GM10248 (cell line): ENCODE measurements at regions of chr12 and their contacts with region 1.

Region 1: GRCh38 chr12:95959107-95959506 is 16.0 kb downstream of the AMDHD1 start:
- DNase-seq: no peak
- CTCF ChIP-seq: peak; percentile 9

Region 2: DNA sequence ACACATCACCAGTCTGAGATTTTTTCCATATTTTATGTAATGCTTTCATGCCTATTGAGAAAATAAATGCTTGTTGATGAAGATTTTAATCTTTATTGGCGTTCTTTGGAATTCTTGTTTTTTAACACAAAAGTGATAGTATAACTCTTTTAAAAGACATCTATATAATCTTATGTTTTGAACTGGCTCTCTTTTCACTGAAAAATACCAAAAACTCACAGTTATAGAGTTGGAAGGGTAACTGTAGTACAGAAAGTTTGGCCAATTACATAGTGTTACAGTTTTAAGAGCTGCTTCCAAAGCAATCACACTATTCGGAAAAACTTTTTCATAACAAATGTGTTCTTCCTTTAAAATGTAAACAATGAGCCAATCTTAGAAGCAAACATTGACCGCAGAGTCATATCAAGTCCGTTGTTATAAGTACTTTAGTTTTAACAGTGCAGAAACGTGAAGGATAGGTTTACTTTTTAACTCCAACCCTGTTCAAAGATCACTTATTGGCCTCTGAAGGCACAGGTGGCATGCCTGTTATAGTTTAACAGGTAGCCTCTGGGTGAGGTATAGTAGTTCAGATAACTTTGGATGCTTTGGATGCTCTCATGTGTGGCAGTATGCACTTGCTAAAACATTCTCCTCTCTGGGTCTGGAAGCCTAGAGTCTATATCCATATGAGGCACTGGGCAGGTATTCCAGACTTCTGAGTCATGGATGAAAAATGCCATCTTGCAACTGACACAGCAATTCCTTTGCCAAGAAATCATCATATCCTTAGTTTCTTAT is 156.4 kb before region 1 on chr12:
- CTCF ChIA-PET with region 1: no interaction called
- POLR2A ChIA-PET with region 1: no interaction called
- DNase-seq: no peak
- CTCF ChIP-seq: no peak

Region 3: DNA sequence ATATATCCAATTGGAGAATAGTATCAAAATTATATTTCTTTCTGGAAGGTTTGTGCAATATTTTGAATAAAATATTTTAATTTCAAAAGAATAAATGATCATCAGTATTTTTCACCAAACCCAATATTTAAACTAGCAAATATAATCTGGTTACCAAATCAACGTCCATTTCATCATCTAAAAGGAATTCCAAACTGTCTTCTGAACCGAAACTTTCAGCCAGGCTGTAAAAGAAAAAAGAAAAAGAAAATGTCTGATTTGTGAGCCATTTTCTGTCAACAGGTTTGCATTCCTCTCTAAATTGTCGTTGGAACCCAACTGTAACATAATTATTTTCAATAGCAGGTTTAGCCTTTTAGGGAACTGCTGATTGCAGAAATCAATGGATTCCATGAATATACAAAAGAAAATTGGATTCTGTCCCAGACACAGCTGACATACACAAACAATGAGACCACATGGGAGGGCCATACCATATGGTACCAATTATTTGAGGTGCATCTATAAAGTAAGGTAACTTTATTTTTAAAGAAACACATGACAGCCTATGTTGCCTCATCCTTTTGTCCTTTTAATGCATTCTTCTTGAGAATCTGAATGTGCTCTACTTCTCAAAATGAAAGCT is 77.7 kb before region 1 on chr12:
- CTCF ChIA-PET with region 1: no interaction called
- POLR2A ChIA-PET with region 1: no interaction called
- DNase-seq: no peak
- CTCF ChIP-seq: no peak

Region 4: GRCh38 chr12:95918194-95918993 is 40.7 kb before region 1 on chr12:
- CTCF ChIA-PET with region 1: interaction called, 12 read pairs
- POLR2A ChIA-PET with region 1: no interaction called
- DNase-seq: peak; percentile 48
- CTCF ChIP-seq: peak; percentile 77

Region 5: DNA sequence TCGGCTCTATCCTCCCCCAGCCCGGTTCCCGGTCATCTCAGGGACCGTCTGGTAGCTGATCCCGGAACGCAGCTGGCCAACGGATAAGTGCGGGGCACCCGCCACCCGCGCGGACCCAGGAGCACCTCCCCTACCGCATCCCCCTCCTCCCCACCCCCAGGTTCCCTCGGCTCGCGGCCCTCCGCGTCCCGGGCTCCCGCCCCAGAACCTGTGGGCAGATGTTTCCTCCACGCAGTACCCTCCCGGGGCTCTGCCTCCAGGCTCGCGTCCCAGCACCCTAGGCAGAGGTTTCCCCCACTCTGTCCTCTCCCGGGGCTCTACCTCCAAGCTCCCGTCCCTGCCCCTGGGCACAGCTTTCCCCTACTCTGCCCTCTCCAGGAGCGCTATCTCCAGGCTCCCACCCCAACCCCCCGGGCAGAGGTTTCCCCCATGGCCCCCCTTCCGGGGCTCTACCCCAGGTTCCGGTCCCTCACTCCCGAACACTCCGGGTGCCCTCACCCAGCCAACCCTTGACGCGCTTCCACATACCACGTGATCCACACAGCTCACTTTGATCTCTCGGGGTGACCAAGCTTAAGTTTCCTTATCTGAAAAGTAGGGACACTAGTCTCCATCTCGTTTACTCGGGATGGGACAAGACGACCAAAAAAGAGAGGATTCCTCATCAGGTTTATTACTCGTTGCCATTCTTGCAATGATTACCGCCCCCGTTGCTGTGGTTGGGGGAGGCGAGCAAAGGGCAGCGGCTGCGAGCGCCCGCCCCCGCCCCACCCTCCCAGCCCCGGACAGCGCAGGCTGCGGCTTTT is 16.4 kb before region 1 on chr12 and contains the start of gene CCDC38:
- CTCF ChIA-PET with region 1: interaction called, 34 read pairs
- POLR2A ChIA-PET with region 1: no interaction called
- DNase-seq: peak; percentile 93
- CTCF ChIP-seq: no peak